Endothelial cell of umbilical vein (primary cell): ENCODE measurements at regions of chr5 and their contacts with region 1.

Region 1: DNA sequence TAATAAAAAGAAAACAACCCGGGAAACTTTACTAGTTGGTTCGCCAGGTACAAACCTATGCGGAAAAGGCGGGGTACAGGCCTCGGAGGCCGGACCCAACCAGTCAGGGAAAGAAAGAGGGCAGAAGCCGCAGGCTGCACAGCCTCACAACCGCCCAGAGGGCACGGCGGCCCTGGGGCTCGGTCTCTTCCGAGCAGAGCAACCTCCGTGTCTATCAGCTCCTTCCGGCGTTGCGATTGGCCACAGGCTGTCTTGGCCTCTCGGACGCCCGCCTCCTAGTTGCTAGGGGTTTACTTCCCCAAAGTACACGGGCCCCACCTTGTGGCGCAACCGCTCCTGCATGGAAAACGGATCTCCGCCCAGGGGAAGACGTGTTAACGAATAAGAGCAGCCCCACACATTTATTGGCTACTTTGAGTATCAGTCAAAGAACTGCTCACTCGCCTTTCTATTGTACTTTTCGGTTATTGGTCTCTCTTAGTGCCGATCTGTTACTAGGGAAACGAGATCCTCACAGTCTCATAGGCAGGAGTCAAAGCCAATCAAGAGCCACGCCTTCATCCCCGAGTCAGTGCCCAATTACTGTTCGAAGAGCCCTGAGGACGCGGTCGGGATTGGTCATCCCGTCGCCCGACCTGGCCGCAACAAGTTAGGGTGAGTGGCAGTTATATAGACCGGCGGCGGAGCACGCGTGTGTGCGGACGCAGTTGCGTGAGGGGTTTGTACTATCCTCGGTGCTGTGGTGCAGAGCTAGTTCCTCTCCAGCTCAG is at the start of gene G3BP1:
- DNase-seq: peak; percentile 100
- H3K4me3 ChIP-seq: peak within 1 kb of the TSS; percentile 62 to 85 (median 65)
- H3K27ac ChIP-seq: peak within 1 kb of the TSS; percentile 75
- H3K4me1 ChIP-seq: peaks cover 32% of the 10 kb centered on the region
- H3K27me3 ChIP-seq: no peaks in the 10 kb centered on the region
- CTCF ChIP-seq: peak; percentile 74
- POLR2A ChIP-seq: peak; percentile 96
- total RNA-seq, gene G3BP1: 255 and 262 TPM in 2 replicates

Region 2: GRCh38 chr5:151252762-151253604 is 518.5 kb before region 1 on chr5 and contains the start of gene GM2A:
- CTCF ChIA-PET with region 1: interaction called, 3 read pairs
- POLR2A ChIA-PET with region 1: no interaction called
- dilution Hi-C with region 1: no loop called
- intact Hi-C with region 1: loop called (anchors 10 kb)
- DNase-seq: peak; percentile 100
- H3K4me3 ChIP-seq: peak within 1 kb of the TSS; percentile 48 to 75 (median 55)
- H3K27ac ChIP-seq: no peak within 1 kb of the TSS
- H3K4me1 ChIP-seq: peaks cover 5% of the 10 kb centered on the region
- H3K27me3 ChIP-seq: no peaks in the 10 kb centered on the region
- CTCF ChIP-seq: no peak
- POLR2A ChIP-seq: peak; percentile 46
- total RNA-seq, gene GM2A: 21.2 and 22.5 TPM in 2 replicates

Region 3: GRCh38 chr5:151664694-151665585 is 106.5 kb before region 1 on chr5:
- CTCF ChIA-PET with region 1: interaction called, 11 read pairs
- POLR2A ChIA-PET with region 1: interaction called, 3 read pairs
- dilution Hi-C with region 1: no loop called
- intact Hi-C with region 1: loop called (anchors 1 kb)
- DNase-seq: peak; percentile 94
- H3K4me3 ChIP-seq: no peak overlapping the region
- H3K27ac ChIP-seq: peak overlapping the region; percentile 92
- H3K4me1 ChIP-seq: peaks cover 46% of the 10 kb centered on the region
- H3K27me3 ChIP-seq: no peaks in the 10 kb centered on the region
- CTCF ChIP-seq: no peak
- POLR2A ChIP-seq: no peak

Region 4: DNA sequence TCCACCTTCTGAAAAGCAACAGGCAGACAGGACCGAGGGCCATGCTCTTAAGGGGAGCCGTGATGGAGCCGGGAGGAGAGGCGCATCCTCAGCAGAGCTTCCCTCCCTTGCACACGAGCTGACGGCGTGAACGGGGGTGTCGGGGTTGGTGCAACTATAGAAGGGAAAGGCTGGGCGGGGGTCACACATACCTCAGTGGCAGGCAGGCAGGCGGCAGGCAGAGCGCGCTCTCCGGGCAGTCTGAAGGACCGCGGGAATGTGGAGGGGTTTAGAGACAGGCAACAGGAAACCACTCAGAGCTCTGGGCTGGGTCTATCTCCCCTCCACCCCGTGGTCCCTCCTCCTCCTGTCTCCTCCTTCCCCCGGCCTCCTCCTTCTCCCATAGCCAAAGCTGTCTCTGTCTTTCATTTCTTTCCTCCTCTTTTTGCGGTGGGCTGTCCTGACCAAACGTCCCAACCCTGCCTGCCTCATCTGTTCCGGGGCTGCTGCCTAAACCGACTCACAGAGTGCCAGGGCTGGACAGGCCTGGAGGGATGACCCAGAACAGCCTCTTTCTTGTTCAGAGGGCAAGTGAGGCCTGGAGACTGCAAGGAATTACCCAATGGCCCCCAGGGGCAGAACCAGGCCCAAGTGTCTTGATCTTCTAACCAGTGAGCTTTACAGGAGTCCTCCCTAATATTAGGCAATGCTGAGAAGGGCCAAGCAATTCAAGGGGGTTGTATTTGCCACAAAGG is 84.6 kb before region 1 on chr5 and contains the start of gene SPARC:
- CTCF ChIA-PET with region 1: no interaction called
- POLR2A ChIA-PET with region 1: interaction called, 4 read pairs
- dilution Hi-C with region 1: no loop called
- intact Hi-C with region 1: loop called (anchors 2 kb)
- DNase-seq: peak; percentile 85
- H3K4me3 ChIP-seq: peak within 1 kb of the TSS; percentile 73 to 98 (median 89)
- H3K27ac ChIP-seq: peak within 1 kb of the TSS; percentile 84
- H3K4me1 ChIP-seq: peaks cover 38% of the 10 kb centered on the region
- H3K27me3 ChIP-seq: no peaks in the 10 kb centered on the region
- CTCF ChIP-seq: no peak
- POLR2A ChIP-seq: peak; percentile 100
- total RNA-seq, gene SPARC: 3,114 and 3,174 TPM in 2 replicates

Region 5: GRCh38 chr5:151719228-151720000 is 52.0 kb before region 1 on chr5:
- CTCF ChIA-PET with region 1: no interaction called
- POLR2A ChIA-PET with region 1: no interaction called
- dilution Hi-C with region 1: no loop called
- intact Hi-C with region 1: loop called (anchors 1 kb)
- DNase-seq: peak; percentile 60
- H3K4me3 ChIP-seq: no peak overlapping the region
- H3K27ac ChIP-seq: no peak overlapping the region
- H3K4me1 ChIP-seq: no peaks in the 10 kb centered on the region
- H3K27me3 ChIP-seq: no peaks in the 10 kb centered on the region
- CTCF ChIP-seq: peak; percentile 52 to 67
- POLR2A ChIP-seq: no peak

Region 6: DNA sequence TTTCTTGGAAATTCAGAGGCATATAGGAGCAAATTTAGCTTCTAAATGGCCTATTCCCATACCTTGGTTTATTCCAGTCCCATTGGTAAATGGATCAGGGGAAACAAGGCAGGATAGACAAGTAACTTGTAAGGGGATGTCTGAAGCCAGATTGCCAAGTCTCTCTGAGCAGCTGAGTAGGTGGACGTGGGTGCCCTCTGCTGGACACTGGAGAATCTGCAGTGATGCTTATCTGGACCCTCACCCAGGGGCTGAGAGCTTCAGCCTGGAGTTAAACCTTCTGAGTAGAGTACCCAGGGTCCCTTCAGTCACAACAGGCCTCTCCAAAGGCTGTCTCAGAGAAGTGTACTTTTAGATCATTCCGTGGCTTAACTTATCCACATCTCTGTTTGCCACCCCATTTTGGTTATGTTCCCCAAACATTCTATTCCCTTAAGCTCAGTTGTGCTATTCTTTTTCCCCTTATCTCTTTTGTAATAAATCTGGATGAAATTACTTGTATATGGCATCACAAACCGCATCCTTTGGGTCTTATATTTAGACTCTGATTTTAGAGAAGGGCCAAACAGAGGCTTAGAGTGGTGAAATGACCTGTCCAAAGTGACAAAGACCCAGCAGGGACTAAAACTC is 371.5 kb after region 1 on chr5:
- CTCF ChIA-PET with region 1: no interaction called
- POLR2A ChIA-PET with region 1: interaction called, 4 read pairs
- dilution Hi-C with region 1: no loop called
- intact Hi-C with region 1: loop called (anchors 2 kb)
- DNase-seq: peak; percentile 47
- H3K4me3 ChIP-seq: no peak overlapping the region
- H3K27ac ChIP-seq: no peak overlapping the region
- H3K4me1 ChIP-seq: no peaks in the 10 kb centered on the region
- H3K27me3 ChIP-seq: no peaks in the 10 kb centered on the region
- CTCF ChIP-seq: peak; percentile 76 to 94
- POLR2A ChIP-seq: no peak